ENCODE measurements at regions of chr14 and their contacts with region 1.

Region 1: DNA sequence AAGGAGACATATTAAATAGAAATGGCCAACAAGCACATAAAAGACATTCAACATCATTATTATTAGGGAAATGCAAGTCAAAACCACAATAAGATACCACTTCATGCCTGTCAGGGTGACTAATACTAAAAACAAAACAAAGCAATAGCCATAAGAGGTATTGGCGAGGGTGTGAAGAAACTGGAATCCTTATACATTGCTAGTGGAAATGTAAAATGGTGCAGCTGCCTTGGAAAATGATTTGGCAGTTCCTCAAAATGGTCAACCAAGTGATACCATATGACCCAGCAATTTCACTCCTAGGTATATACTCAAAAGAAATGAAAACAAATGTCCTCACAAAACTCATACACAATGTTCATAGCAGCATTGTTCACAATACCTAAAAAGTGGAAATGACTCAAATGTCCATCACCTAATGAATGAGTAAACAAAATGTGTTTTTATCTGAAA is 27.0 kb downstream of the GPR135 start:
- DNase-seq: no peak
- H3K4me3 ChIP-seq: no peak overlapping the region
- H3K27ac ChIP-seq: no peak overlapping the region
- H3K4me1 ChIP-seq: no peaks in the 10 kb centered on the region
- H3K27me3 ChIP-seq: no peaks in the 10 kb centered on the region
- CTCF ChIP-seq: no peak
- POLR2A ChIP-seq: no peak

Region 2: GRCh38 chr14:59126710-59127432 is 311.4 kb before region 1 on chr14:
- intact Hi-C with region 1: loop called (anchors 5 kb)
- DNase-seq: peak; percentile 37
- H3K4me3 ChIP-seq: no peak overlapping the region
- H3K27ac ChIP-seq: no peak overlapping the region
- H3K4me1 ChIP-seq: peaks cover 2% of the 10 kb centered on the region
- H3K27me3 ChIP-seq: no peaks in the 10 kb centered on the region
- CTCF ChIP-seq: peak; percentile 74 to 86 (median 79)
- POLR2A ChIP-seq: no peak

Measured in testis (tissue), 5 donors.